ENCODE measurements at regions of chrX and their contacts with region 1.

Region 1: DNA sequence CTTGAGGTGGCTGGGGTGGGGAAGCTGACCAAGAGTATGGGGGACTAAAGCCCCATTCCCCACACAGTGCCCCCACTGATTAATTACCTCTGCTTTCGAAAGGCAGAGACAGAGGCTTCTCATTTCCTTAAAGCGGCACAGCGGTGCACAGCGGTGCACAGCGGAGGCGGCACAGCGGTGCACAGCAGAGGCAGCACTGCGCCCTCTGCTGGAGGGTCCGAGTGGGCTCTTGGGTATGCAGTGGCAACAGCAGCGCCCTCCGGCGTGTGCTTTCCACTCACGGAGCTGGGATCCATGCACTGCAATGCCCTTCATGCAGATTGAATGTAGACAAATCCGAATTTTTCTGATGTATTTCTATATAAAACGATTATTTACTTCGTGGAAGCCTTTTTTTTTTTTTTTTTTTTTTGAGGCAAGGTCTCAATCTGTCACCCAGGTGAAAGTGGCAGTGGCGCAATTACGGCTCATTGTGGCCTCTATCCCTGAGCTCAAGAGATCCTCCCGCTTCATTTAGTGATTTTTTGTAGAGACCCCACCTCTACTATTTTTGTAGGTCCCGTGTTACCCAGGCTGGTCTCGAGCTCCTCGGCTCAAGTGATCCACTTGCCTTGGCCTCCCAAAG is 19.7 kb upstream of the PRPS2 start:
- DNase-seq: peak; percentile 62
- CTCF ChIP-seq: peak; percentile 80

Region 2: GRCh38 chrX:12360383-12360782 is 411.2 kb before region 1 on chrX:
- CTCF ChIA-PET with region 1: no interaction called
- POLR2A ChIA-PET with region 1: no interaction called
- DNase-seq: no peak
- CTCF ChIP-seq: no peak

Region 3: DNA sequence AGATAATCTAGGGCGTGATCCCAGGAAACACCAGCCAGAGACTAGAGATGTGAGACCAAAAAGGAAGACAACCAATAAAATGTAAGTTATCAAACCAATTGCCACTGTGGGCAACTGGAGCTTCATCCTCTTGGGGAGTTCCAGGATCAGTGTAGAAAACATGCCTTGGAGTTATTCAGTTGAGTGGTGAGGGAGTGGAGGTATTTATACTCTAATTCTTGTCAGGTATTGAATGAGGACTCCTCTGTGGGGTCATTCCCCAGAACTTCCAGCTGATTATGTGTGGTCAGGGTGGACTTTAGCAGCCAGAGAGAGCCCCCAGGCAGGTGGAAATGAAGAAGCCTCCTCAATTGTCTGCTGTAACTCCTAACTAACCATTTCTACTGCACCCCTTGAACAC is 124.3 kb before region 1 on chrX:
- CTCF ChIA-PET with region 1: no interaction called
- POLR2A ChIA-PET with region 1: no interaction called
- DNase-seq: no peak
- CTCF ChIP-seq: no peak

Region 4: DNA sequence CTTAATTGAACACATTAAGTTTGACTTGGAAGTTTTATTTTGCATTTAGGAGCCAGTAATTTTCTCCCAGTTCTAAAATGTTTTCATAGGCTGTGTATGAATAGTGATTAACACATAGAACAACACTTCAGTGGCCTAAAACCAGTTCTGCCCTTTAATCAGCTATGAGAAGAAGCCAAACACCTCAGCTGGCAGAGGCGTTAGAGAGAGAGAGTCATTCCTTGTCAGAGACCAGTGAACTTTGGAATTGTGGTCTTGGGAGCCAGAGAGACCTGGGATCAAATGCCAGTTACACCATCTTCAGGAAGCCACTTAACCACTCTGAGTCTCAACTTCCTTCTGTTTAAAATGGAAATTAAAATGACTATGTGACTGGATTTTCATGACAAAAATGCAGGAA is 19.7 kb before region 1 on chrX:
- CTCF ChIA-PET with region 1: interaction called, 22 read pairs
- POLR2A ChIA-PET with region 1: no interaction called
- DNase-seq: no peak
- CTCF ChIP-seq: no peak

Region 5: GRCh38 chrX:12758292-12758691 is 13.3 kb before region 1 on chrX:
- CTCF ChIA-PET with region 1: interaction called, 26 read pairs
- POLR2A ChIA-PET with region 1: no interaction called
- DNase-seq: no peak
- CTCF ChIP-seq: no peak

Region 6: DNA sequence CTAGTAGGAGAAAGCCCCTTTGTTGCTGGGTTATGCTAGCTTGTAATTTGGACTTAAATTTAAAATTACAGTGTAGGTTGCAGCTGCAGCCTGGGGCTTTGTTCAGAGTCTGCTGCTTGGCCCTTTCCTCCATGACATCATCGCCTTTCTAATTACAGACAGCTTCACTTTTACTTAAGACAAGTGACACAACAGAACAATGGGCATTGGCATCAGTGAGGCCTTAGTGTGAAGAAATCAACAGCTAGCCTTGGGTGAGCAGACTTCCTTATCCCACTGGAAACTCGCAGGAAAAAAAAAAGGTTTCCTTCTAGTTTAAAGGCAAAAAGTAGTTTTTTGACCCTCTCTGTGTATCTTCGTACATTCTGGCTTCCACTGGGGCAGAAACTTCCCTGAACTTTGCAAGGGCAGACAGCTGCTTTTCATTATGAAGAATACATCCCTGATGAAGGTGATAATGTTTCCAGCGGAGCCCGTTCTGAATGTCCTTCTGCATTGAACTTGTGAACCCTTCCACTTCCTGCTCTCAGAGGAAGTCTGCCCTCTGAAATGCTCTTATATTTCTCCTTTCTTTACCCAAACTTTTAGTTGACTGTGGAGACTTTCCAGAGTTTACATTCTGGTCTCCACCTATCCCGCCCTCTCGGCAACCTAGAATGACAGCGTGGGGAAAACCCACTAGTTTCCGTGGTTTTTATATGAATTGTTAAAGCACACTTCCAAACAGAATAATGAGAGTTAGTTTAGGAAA is 396.1 kb after region 1 on chrX:
- CTCF ChIA-PET with region 1: no interaction called
- POLR2A ChIA-PET with region 1: no interaction called
- DNase-seq: no peak
- CTCF ChIP-seq: no peak

Measured in GM10248 (cell line).